ENCODE measurements at regions of chr15 and their contacts with region 1.

Region 1: GRCh38 chr15:64324165-64324877 is 31.7 kb downstream of the CSNK1G1 start:
- DNase-seq: no peak
- ATAC-seq: no peak
- H3K4me3 ChIP-seq: no peak overlapping the region
- H3K4me3 Mint-ChIP-seq: no peak overlapping the region
- H3K27ac ChIP-seq: no peak overlapping the region
- H3K27ac Mint-ChIP-seq: no peak overlapping the region
- H3K4me1 ChIP-seq: no peaks in the 10 kb centered on the region
- H3K4me1 Mint-ChIP-seq: peaks cover 0 to 15% (median 4%) of the 10 kb centered on the region in 7 donors
- H3K27me3 ChIP-seq: no peaks in the 10 kb centered on the region
- H3K27me3 Mint-ChIP-seq: no peaks in the 10 kb centered on the region

Region 2: GRCh38 chr15:64263567-64263966 is 60.8 kb before region 1 on chr15:
- CTCF ChIA-PET with region 1: no interaction called
- POLR2A ChIA-PET with region 1: interaction called, 11 read pairs
- intact Hi-C with region 1: no loop called
- DNase-seq: no peak
- ATAC-seq: no peak
- H3K4me3 ChIP-seq: no peak overlapping the region
- H3K4me3 Mint-ChIP-seq: peak overlapping the region in 2 of 10 donors; percentile 24 to 31
- H3K27ac ChIP-seq: no peak overlapping the region
- H3K27ac Mint-ChIP-seq: peak overlapping the region in 1 of 9 donors; percentile 72
- H3K4me1 ChIP-seq: no peaks in the 10 kb centered on the region
- H3K4me1 Mint-ChIP-seq: peaks cover 21 to 39% (median 33%) of the 10 kb centered on the region in 7 donors
- H3K27me3 ChIP-seq: no peaks in the 10 kb centered on the region
- H3K27me3 Mint-ChIP-seq: no peaks in the 10 kb centered on the region